Dorsolateral prefrontal cortex (tissue), 120 donors: ENCODE measurements at regions of chr12 and their contacts with region 1.

Region 1: GRCh38 chr12:72271451-72272090 is 599 bp upstream of the TRHDE start:
- DNase-seq: peak in 9 of 10 donors; percentile 36 to 72 (median 65)
- H3K4me3 ChIP-seq: peak overlapping the region; percentile 43 to 85 (median 70)
- H3K27ac ChIP-seq: peak overlapping the region in 56 of 59 donors; percentile 5 to 90 (median 74)
- H3K27me3 ChIP-seq: peaks cover 0 to 39% (median 8%) of the 10 kb centered on the region in 45 donors
- CTCF ChIP-seq: peak in 2 of 56 donors; percentile 4 to 21

Region 2: DNA sequence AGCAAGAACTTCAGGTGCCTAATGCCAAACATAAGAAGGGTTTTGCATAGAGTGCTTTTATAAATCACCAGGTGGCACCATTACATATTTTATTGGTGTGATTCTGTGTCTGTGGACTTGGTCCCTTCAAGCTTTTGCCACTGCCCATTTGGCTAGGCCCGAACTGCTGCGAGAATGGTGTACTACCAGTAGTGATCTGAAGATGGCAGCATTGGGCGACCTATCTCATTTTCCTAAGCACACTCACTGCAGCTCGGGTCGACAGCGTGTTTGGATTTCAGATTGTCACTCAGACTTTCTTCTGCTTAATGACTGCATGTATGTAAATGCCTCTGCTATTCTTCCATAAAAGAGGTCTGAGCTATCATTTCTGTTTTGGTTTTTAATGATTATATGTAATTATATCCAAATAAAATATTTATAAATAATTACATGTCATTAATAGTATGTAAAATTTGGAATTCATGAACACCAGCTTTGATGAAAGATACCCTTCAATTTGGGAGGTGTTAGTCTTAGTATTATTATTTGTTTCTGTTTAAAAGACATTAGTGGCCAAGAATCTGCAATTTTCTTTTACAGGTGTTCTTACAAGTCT is 254.4 kb before region 1 on chr12:
- intact Hi-C with region 1: loop called (anchors 5 kb)
- DNase-seq: peak; percentile 47 to 84 (median 80)
- H3K4me3 ChIP-seq: no peak overlapping the region
- H3K27ac ChIP-seq: peak overlapping the region in 1 of 59 donors; percentile 69
- H3K27me3 ChIP-seq: no peaks in the 10 kb centered on the region
- CTCF ChIP-seq: peak; percentile 65 to 97 (median 89)

Region 3: DNA sequence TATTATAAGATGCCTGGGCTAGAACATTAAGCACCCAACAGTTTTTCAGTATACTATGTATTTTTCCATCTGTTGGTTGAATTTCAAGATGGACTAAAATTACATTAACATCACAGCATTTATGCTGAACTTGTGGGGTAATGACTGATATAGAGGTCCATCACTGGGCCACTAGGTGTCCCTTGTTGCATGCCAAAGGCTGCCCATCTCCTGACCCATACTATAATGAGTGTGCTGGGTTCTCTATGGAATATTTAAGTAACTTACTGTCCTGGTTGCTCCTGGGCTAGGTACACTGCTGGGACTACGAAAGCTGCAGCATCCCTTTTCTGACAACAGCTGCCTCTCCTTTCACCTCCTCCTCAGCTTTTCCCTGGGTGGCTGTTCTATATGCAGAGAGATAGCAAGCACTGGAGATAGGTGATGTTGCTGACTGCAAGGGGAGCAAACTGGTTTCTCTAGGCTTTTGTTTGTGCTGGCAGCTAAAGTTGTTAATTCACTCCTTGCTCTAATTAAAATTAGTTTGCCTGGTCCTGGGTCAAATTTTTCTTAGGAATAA is 138.0 kb before region 1 on chr12:
- intact Hi-C with region 1: loop called in 1 of 2 experiments (anchors 10 kb)
- DNase-seq: peak in 3 of 10 donors; percentile 47 to 53 (median 48)
- H3K4me3 ChIP-seq: no peak overlapping the region
- H3K27ac ChIP-seq: peak overlapping the region in 41 of 59 donors; percentile 11 to 82 (median 57)
- H3K27me3 ChIP-seq: no peaks in the 10 kb centered on the region
- CTCF ChIP-seq: peak in 19 of 56 donors; percentile 7 to 34 (median 21)

Region 4: GRCh38 chr12:72346363-72346944 is 74.9 kb after region 1 on chr12:
- intact Hi-C with region 1: loop called in 1 of 2 experiments (anchors 5 kb)
- DNase-seq: peak in 9 of 10 donors; percentile 58 to 91 (median 68)
- H3K4me3 ChIP-seq: no peak overlapping the region
- H3K27ac ChIP-seq: peak overlapping the region in 12 of 59 donors; percentile 14 to 77 (median 33)
- H3K27me3 ChIP-seq: no peaks in the 10 kb centered on the region
- CTCF ChIP-seq: peak; percentile 46 to 89 (median 77)